ENCODE measurements at regions of chr3 and their contacts with region 1.

Region 1: DNA sequence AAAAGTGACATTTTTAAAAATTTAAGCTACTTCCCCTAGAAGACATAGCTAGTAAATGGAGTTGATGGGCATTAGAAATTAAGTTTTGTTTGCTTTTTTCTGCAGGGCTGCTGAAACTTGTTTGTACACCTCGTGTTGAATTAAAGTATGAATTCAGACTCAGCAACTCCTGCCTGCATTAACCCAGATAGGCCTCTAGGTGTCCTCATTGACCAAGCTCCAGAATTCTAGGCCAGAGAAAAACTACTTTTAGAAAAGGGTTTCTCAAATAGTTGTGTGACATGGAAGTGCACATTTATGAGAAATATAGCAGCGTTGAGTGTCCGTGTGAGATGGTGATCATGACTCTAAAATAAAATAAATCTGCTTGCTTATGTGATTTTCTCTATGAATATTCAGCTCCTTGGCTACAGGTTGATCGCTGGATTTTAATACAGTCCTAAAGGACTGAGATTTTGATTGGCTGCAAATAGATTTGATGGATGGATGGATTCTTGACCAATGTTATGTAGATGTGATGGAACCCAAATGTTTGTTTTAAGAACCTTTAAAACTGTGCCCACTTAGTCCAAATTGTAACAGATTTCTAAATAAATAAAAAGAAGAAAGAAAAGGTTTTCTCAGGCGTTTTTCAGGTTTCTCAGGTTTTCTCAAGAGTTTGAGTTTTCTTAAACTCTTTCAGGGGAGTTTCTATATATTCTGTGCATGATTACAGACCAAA is 39.4 kb upstream of the LMOD3 start:
- DNase-seq: peak in 1 of 2 donors; percentile 25
- ATAC-seq: peak in 7 of 8 donors; percentile 25 to 65 (median 56)
- H3K4me3 ChIP-seq: no peak overlapping the region
- H3K27ac ChIP-seq: no peak overlapping the region
- H3K4me1 ChIP-seq: peaks cover 0 to 8% (median 0%) of the 10 kb centered on the region in 9 donors
- H3K27me3 ChIP-seq: no peaks in the 10 kb centered on the region
- CTCF ChIP-seq: peak; percentile 83 to 100 (median 95)

Region 2: GRCh38 chr3:69204315-69204957 is 42.7 kb after region 1 on chr3:
- intact Hi-C with region 1: no loop called
- DNase-seq: peak in 1 of 2 donors; percentile 10
- ATAC-seq: peak in 5 of 8 donors; percentile 36 to 88 (median 69)
- H3K4me3 ChIP-seq: no peak overlapping the region
- H3K27ac ChIP-seq: no peak overlapping the region
- H3K4me1 ChIP-seq: peaks cover 0 to 38% (median 26%) of the 10 kb centered on the region in 9 donors
- H3K27me3 ChIP-seq: no peaks in the 10 kb centered on the region
- CTCF ChIP-seq: no peak

Region 3: DNA sequence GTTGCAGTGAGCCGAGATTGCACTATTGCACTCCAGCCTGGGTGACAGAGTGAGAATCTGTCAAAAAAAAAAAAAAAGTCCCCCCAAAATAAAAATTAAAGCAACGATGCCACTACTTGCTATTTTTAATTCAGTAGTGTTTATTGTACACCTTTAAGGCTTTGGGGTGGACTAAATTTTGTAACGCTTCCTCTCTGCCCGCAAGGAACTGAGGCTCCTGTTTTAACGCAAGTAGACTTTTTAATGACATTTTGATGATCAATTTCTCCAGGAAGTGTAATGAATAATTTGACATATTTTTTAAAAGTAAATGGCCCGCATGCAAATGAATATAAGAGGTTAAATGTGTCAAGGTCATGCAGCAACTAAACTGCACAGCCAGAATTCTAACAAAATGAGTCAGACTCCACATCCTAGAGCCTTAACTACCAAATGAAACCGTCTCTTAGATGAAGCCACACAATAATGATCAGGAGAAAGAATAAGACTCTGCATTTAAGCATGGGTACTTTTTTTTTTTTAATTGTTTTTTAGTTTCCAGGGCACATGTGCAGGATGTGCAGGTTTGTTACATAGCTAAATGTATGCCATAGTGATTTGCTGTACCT is 57.5 kb after region 1 on chr3:
- intact Hi-C with region 1: no loop called
- DNase-seq: no peak
- ATAC-seq: no peak
- H3K4me3 ChIP-seq: no peak overlapping the region
- H3K27ac ChIP-seq: no peak overlapping the region
- H3K4me1 ChIP-seq: no peaks in the 10 kb centered on the region
- H3K27me3 ChIP-seq: no peaks in the 10 kb centered on the region
- CTCF ChIP-seq: no peak

Region 4: DNA sequence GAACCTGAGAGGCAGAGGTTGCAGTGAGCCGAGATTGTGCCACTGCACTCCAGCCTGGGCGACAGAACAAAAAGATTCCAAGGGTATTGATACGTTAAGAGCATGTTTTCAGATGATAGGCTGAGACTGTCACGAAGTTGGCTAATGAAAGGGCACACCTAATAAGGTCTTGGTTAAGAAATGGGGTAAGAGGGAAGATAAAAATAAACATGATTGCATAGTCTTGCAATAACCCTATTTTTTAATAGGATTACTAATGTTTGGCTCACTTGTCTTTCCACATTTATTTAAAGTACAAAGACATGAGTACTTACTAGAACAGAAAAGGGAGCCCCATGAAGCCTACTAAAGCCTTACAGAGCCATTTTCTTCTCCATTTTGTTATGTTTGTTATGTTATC is 115.1 kb after region 1 on chr3:
- intact Hi-C with region 1: loop called in 1 of 10 experiments (anchors 1 kb)
- DNase-seq: no peak
- ATAC-seq: no peak
- H3K4me3 ChIP-seq: no peak overlapping the region
- H3K27ac ChIP-seq: no peak overlapping the region
- H3K4me1 ChIP-seq: peaks cover 0 to 1% (median 0%) of the 10 kb centered on the region in 9 donors
- H3K27me3 ChIP-seq: no peaks in the 10 kb centered on the region
- CTCF ChIP-seq: no peak

Region 5: DNA sequence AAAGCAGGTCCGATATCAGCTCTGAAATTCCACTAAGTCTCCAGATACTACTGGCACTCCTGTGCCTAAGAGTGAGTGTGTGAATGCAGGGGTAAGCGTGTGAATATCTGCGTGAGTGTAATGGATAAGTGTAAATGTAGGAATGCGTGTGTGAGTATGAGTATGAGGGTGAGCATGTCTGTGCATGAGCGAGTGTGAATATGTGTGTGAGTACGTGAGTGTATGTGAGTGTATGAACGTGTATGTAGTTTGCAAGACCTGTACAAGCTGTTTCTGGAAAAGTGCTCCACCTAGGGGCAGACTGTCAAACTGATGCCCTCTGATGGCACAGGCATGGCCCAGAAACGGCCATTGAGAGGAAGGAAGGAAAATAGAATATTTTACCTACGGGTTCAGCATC is 248.5 kb after region 1 on chr3:
- intact Hi-C with region 1: loop called in 4 of 10 experiments (anchors 5 to 10 kb)
- DNase-seq: peak in 1 of 2 donors; percentile 85
- ATAC-seq: peak; percentile 78 to 92 (median 86)
- H3K4me3 ChIP-seq: peak overlapping the region in 4 of 10 donors; percentile 14 to 37 (median 26)
- H3K27ac ChIP-seq: peak overlapping the region in 4 of 10 donors; percentile 53 to 78 (median 62)
- H3K4me1 ChIP-seq: peaks cover 0 to 46% (median 28%) of the 10 kb centered on the region in 9 donors
- H3K27me3 ChIP-seq: no peaks in the 10 kb centered on the region
- CTCF ChIP-seq: peak; percentile 66 to 89 (median 81)

Region 6: GRCh38 chr3:69425261-69425660 is 263.5 kb after region 1 on chr3:
- intact Hi-C with region 1: loop called in 9 of 10 experiments (anchors 2 to 10 kb)
- DNase-seq: peak in 1 of 2 donors; percentile 36
- ATAC-seq: peak in 5 of 8 donors; percentile 38 to 66 (median 60)
- H3K4me3 ChIP-seq: no peak overlapping the region
- H3K27ac ChIP-seq: no peak overlapping the region
- H3K4me1 ChIP-seq: peaks cover 0 to 22% (median 13%) of the 10 kb centered on the region in 9 donors
- H3K27me3 ChIP-seq: no peaks in the 10 kb centered on the region
- CTCF ChIP-seq: peak; percentile 21 to 67 (median 59)